Right ventricle myocardium superior (tissue), 1 donor: ENCODE measurements at regions of chr20 and their contacts with region 1.

Region 1: DNA sequence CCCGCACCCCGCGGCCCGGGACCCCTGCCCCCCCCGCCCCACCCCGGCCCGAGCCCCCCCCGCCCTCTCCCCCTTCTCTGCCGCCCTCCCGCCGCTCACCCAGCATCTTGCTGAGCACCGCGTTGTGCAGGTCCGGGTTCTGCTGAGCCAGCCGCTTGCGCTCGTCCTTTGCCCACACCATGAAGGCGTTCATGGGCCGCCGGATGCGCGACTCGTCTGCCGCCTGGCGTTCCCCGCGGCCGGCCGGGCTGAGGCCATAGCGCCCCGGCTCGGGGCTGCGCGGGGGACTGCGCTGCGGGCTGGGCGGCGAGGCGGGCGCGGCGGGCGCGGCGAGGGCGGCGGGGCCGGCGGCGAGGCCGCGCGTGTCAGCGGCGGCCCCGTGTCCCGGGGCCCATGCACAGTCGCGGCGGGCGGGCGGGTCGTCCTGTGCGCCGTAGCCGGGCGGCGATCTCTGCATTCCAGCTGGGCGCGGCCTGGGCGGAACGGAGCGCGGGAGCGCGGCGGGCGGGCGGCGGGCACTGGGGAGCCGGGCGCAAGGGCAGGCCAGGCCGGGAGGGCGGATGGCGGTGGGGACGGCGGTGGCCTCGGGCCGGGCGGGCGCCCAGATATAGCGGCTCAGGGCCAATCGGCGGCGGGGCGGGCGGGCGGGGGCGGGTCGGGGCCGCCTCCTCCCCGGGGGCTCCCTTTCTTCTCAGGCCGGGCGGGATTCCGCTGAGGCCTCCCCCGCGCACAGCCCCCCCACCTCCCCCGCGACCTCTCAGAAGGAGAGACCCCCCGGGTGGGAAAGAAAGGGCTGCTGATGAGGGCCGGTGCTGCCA is at the start of gene SOX18:
- DNase-seq: peak; percentile 67
- ATAC-seq: peak; percentile 14
- total RNA-seq, gene SOX18: 34.3 TPM

Region 2: GRCh38 chr20:64119681-64120341 is 70.5 kb after region 1 on chr20:
- intact Hi-C with region 1: loop called (anchors 10 kb)
- DNase-seq: peak; percentile 26
- ATAC-seq: no peak